Common myeloid progenitor, CD34-positive (primary cell): ENCODE measurements at regions of chr5 and their contacts with region 1.

Region 1: DNA sequence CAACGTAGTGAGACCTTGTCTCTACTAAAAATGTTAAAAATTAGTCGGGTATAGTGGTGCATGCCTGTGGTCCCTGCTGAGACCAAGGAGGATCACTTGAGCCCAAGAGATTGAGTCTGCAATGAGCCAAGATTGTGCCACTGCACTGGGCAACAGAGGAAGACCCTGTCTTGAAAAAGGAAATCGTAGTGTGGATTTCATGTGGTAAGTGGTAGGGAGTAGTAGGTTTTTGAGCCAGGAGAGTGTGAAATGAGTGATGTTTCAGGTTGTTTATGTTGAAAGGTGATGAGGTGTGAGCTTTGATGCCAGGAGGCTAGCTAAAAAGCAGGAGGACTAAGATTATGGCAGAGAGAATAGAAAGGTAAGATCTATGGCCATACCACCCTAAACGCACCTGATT is 5.9 kb downstream of the MATR3 start:
- DNase-seq: no peak
- H3K4me3 ChIP-seq: peak overlapping the region in 1 of 7 experiments; percentile 6
- H3K27ac ChIP-seq: peak overlapping the region in 1 of 2 experiments; percentile 6
- H3K4me1 ChIP-seq: peaks cover 21 to 59% (median 26%) of the 10 kb centered on the region in 4 experiments
- H3K27me3 ChIP-seq: no peaks in the 10 kb centered on the region

Region 2: DNA sequence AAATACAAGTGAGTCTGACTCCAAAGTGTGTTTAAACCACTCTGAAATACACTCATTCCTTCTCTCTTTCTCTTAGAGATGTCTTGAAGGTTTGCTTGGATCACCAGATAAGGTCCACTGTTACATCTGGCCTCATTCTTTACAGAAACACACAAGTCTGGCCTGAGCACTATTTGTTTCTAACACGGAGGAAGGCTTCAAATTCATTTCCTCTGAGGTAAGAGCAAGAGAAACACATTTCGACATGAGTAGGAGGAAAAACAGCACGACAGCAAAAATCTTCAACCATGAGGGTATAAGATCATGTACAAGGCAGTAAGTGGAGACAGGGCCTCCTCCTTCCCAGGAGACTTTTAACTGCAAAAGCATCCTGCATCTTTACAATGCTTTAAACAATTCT is 109.4 kb before region 1 on chr5:
- CTCF ChIA-PET with region 1: no interaction called
- POLR2A ChIA-PET with region 1: no interaction called
- DNase-seq: peak in 2 of 3 donors; percentile 25 to 35
- H3K4me3 ChIP-seq: no peak overlapping the region
- H3K27ac ChIP-seq: peak overlapping the region in 1 of 2 experiments; percentile 40
- H3K4me1 ChIP-seq: peaks cover 8 to 59% (median 30%) of the 10 kb centered on the region in 4 experiments
- H3K27me3 ChIP-seq: no peaks in the 10 kb centered on the region

Region 3: DNA sequence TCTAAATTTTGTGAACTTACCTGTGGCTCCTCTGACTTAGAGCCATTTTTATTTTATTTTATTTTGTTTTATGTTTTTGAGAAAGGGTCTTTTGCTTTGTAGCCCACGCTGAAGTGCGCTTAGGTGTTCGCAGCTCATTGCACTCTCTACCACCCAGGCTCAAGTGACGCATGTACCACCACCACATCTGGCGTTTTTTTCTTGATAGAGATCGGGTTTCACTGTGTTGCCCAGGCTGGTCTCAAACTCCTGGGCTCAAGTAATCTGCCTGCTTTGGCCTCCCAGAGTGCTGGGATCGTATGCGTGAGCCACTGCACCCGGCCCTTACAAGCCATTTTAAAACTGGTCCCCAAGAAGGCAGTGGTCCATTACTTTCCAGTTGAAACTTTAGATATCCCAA is 12.6 kb after region 1 on chr5:
- CTCF ChIA-PET with region 1: interaction called, 14 read pairs
- POLR2A ChIA-PET with region 1: interaction called, 3 read pairs
- DNase-seq: no peak
- H3K4me3 ChIP-seq: no peak overlapping the region
- H3K27ac ChIP-seq: no peak overlapping the region
- H3K4me1 ChIP-seq: peaks cover 0 to 14% (median 7%) of the 10 kb centered on the region in 4 experiments
- H3K27me3 ChIP-seq: no peaks in the 10 kb centered on the region